Activated CD8-positive, alpha-beta T cell treated with anti-CD3 and anti-CD28 coated beads, Interleukin-2, amount 10 ng/mL, durations not matched to agents 7 days and 5 days (primary cell): ENCODE measurements at regions of chr19 and their contacts with region 1.

Region 1: DNA sequence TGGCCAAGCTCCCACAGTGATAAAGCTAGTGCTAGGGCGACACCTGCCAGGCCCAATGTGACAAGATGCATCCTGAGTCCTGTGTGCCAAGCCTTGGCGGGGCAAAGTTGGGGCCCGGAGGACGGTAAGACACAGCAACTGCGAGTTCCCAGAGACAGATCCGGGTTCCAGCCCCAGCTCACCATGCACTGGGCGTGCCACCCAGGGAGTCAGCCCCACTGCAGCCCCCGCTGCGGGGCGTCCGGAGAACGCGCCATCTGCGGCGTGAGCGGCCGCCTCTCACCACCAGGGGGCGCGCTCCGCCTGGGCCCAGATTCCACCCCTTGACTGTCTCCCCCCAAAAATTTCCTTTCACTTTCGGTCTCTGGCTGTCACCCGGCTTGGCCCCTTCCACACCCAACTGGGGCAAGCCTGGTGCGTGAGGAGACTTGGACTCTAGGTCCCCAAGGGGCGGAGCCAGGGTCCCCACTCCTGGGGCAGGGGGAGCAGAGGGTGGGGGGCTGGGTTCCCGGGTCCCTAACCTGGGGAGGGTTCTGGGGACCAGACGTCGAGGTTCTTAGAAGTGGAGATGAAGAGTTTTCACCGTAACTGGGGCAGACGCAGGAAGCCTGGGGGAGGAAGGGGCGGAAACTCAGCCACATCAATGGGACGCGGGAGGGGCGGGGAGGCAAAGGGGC is at the start of gene FLT3LG:
- DNase-seq: peak; percentile 99
- ATAC-seq: peak; percentile 69
- H3K4me3 Mint-ChIP-seq: peak within 1 kb of the TSS; percentile 94
- H3K27ac Mint-ChIP-seq: peak within 1 kb of the TSS; percentile 94
- H3K4me1 Mint-ChIP-seq: peaks cover 60% of the 10 kb centered on the region
- H3K27me3 Mint-ChIP-seq: no peaks in the 10 kb centered on the region
- total RNA-seq, gene FLT3LG: 280 to 297 TPM

Region 2: DNA sequence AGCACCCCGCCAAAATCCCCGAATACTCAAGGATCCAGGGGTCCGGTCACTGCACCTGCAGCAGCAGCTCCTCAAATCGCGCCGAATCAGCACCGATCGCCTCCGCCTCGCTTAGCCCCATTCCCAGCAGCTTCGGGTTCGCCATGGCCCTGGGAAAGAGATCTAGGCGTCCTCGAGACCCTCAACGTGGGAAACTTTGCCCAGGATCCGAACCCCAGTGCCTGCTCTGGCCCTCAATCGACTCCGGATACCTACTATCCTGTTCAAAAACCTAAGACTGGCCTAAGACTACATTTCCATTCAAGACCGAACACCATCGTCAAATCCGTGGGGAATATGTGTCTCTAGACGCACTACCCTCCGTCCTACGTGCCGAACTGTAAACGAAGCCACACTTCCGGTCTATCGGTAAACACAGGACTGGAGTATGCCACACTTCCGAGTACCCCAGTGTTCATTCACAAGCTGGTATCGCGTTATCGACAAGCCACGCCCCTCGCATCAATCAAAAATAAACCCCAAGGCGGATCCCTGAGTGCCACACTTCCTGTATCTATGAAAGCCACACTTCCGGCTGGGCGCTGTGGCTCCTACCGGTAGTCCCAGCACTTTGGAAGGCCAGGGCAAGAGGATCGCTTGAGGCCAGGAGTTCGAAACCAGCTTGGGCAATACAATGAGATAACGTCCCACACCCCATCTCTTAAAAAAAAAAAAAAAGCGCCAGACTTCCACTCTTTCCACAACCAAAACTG is 22.4 kb before region 1 on chr19 and contains the start of gene PIH1D1:
- CTCF ChIA-PET with region 1: interaction called, 114 read pairs
- POLR2A ChIA-PET with region 1: interaction called, 62 read pairs
- DNase-seq: peak; percentile 99
- ATAC-seq: peak; percentile 67
- H3K4me3 Mint-ChIP-seq: peak within 1 kb of the TSS; percentile 93
- H3K27ac Mint-ChIP-seq: peak within 1 kb of the TSS; percentile 100
- H3K4me1 Mint-ChIP-seq: peaks cover 62% of the 10 kb centered on the region
- H3K27me3 Mint-ChIP-seq: no peaks in the 10 kb centered on the region
- total RNA-seq, gene PIH1D1: 128 to 129 TPM

Region 3: GRCh38 chr19:49487277-49488045 is 13.5 kb after region 1 on chr19 and contains the start of gene RPL13A:
- CTCF ChIA-PET with region 1: interaction called, 13 read pairs
- POLR2A ChIA-PET with region 1: interaction called, 7 read pairs
- DNase-seq: peak; percentile 100
- ATAC-seq: peak; percentile 89
- H3K4me3 Mint-ChIP-seq: peak within 1 kb of the TSS; percentile 98
- H3K27ac Mint-ChIP-seq: peak within 1 kb of the TSS; percentile 96
- H3K4me1 Mint-ChIP-seq: peaks cover 53% of the 10 kb centered on the region
- H3K27me3 Mint-ChIP-seq: no peaks in the 10 kb centered on the region
- total RNA-seq, gene RPL13A: 1,992 to 2,019 TPM

Region 4: GRCh38 chr19:49497047-49497788 is 23.2 kb after region 1 on chr19:
- CTCF ChIA-PET with region 1: interaction called, 20 read pairs
- POLR2A ChIA-PET with region 1: interaction called, 13 read pairs
- DNase-seq: peak; percentile 85
- ATAC-seq: no peak
- H3K4me3 Mint-ChIP-seq: peak overlapping the region; percentile 99
- H3K27ac Mint-ChIP-seq: peak overlapping the region; percentile 99
- H3K4me1 Mint-ChIP-seq: peaks cover 52% of the 10 kb centered on the region
- H3K27me3 Mint-ChIP-seq: no peaks in the 10 kb centered on the region

Region 5: GRCh38 chr19:49570138-49570856 is 96.3 kb after region 1 on chr19:
- CTCF ChIA-PET with region 1: interaction called, 35 read pairs
- POLR2A ChIA-PET with region 1: interaction called, 8 read pairs
- DNase-seq: peak; percentile 88
- ATAC-seq: peak; percentile 16
- H3K4me3 Mint-ChIP-seq: peak overlapping the region; percentile 7
- H3K27ac Mint-ChIP-seq: peak overlapping the region; percentile 66
- H3K4me1 Mint-ChIP-seq: peaks cover 65% of the 10 kb centered on the region
- H3K27me3 Mint-ChIP-seq: no peaks in the 10 kb centered on the region

Region 6: GRCh38 chr19:49580264-49581006 is 106.4 kb after region 1 on chr19 and contains the start of gene NOSIP:
- CTCF ChIA-PET with region 1: interaction called, 10 read pairs
- POLR2A ChIA-PET with region 1: interaction called, 6 read pairs
- DNase-seq: peak; percentile 98
- ATAC-seq: peak; percentile 97
- H3K4me3 Mint-ChIP-seq: peak within 1 kb of the TSS; percentile 96
- H3K27ac Mint-ChIP-seq: peak within 1 kb of the TSS; percentile 91
- H3K4me1 Mint-ChIP-seq: peaks cover 33% of the 10 kb centered on the region
- H3K27me3 Mint-ChIP-seq: no peaks in the 10 kb centered on the region
- total RNA-seq, gene NOSIP: 147 to 159 TPM

Region 7: DNA sequence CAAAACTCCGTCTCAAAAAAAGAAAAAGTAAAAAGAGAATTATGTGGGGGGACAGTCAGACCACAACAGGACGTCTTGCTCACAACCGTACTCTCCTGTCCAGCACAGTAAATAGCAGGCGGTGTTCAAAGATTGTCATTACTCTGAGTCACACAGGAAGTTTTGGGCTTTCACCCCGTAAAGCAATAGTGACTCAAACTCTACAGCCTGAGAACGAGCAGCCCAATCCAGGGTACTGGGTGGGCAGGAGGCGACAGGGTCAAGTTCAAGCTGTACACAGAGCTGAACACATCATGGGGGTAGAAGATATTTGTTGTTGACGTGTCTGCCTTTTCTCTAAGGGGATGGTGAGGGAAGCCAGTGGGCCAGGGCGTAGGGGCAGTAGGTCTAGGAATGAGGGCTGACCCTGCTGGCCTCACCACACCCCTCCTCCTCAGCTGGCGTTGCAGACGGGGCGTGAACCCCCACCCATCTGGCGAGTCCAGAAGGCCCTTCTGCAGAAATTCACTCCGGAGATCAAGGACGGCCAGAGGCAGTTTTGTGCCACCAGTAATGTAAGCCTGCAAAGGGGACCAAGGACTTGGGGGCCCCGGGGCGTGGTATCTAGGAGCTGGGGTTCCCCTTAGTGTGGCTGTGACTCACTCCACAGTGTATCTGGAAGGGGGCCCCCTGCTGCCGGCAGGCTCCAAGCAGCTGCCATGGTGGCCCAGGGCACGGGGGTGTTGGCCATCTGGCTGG is 140.3 kb after region 1 on chr19:
- CTCF ChIA-PET with region 1: no interaction called
- POLR2A ChIA-PET with region 1: no interaction called
- DNase-seq: no peak
- ATAC-seq: no peak
- H3K4me3 Mint-ChIP-seq: no peak overlapping the region
- H3K27ac Mint-ChIP-seq: peak overlapping the region; percentile 71
- H3K4me1 Mint-ChIP-seq: peaks cover 15% of the 10 kb centered on the region
- H3K27me3 Mint-ChIP-seq: no peaks in the 10 kb centered on the region